ENCODE measurements at regions of chr22 and their contacts with region 1.

Region 1: DNA sequence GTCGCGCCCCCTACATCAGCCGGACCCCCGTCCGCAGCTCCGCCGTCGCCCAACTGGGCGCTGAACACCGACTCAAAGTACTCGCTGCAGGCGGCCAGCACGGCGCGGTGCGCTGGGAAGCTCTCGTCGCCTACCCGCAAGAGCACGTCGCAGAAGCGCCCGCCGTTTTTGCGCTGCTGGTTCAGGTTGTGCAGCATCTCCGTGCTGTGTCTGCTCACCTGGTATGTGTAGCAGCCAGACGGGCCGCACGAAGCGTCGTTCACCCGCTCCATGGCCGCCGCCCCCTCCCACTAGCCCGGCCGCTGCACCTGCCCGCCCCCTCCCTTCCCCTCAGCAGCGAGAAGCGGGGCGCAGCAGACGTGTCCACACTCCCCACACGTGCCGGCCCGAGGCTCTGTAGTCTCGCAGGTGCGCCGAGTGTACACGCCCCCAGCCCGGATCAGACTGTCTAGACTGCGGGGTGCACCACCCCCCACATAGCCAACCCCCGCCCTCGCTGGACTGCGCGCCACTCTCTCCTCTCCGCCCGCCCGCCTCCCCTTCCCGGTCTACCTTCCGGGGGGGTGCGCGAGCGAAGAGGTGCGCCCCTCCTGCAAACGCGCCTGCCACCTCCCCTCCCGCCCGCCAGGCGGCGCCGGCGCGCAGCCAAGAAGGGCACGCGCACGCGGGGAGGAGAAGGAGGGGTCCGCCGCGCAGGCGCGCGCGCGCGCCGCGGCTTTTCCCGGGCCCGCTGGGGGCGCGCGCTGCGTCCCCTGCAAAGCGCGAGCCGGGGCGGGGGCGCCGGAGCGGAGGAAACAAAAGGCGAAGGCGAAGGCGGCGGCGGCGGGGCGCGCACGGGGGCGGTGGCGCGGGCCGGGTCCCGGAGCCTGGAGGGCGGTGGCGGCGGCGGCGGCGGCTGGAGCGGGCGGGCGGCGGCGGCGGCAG is 553 bp downstream of the PATZ1 start:
- DNase-seq: peak; percentile 89
- ATAC-seq: peak; percentile 59
- H3K4me3 Mint-ChIP-seq: peak overlapping the region; percentile 83
- H3K27ac Mint-ChIP-seq: peak overlapping the region; percentile 84
- H3K4me1 Mint-ChIP-seq: peaks cover 52% of the 10 kb centered on the region
- H3K27me3 Mint-ChIP-seq: no peaks in the 10 kb centered on the region

Region 2: DNA sequence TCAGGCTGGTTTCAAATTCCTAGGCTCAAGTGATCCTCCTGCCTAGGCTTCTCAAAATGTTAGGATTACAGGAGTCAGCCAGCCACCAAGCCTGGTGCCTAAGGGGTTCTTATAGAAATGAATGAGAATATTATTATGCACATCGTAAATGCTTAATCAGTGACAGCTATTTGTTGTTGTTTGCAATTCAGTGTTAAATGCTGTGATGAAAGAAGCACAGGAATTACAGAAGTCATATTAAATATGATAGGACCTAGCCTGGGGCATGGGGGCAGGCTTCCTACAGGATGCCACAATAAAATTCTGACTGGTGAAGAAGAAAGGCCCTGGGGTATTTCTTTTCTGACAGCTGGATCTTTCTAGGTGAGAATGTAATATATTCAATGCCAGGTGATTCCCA is 14.4 kb after region 1 on chr22:
- CTCF ChIA-PET with region 1: interaction called, 12 read pairs
- POLR2A ChIA-PET with region 1: interaction called, 7 read pairs
- DNase-seq: no peak
- ATAC-seq: no peak
- H3K4me3 Mint-ChIP-seq: no peak overlapping the region
- H3K27ac Mint-ChIP-seq: no peak overlapping the region
- H3K4me1 Mint-ChIP-seq: no peaks in the 10 kb centered on the region
- H3K27me3 Mint-ChIP-seq: no peaks in the 10 kb centered on the region

Region 3: GRCh38 chr22:31399211-31400028 is 53.8 kb after region 1 on chr22 and contains the start of gene DRG1:
- CTCF ChIA-PET with region 1: interaction called, 5 read pairs
- POLR2A ChIA-PET with region 1: interaction called, 24 read pairs
- DNase-seq: peak; percentile 98
- ATAC-seq: peak; percentile 99
- H3K4me3 Mint-ChIP-seq: peak within 1 kb of the TSS; percentile 94
- H3K27ac Mint-ChIP-seq: peak within 1 kb of the TSS; percentile 93
- H3K4me1 Mint-ChIP-seq: peaks cover 24% of the 10 kb centered on the region
- H3K27me3 Mint-ChIP-seq: peaks cover 1% of the 10 kb centered on the region
- total RNA-seq, gene DRG1: 84.0 to 91.4 TPM

Region 4: GRCh38 chr22:31425331-31426050 is 79.9 kb after region 1 on chr22:
- CTCF ChIA-PET with region 1: no interaction called
- POLR2A ChIA-PET with region 1: no interaction called
- DNase-seq: no peak
- ATAC-seq: no peak
- H3K4me3 Mint-ChIP-seq: no peak overlapping the region
- H3K27ac Mint-ChIP-seq: no peak overlapping the region
- H3K4me1 Mint-ChIP-seq: no peaks in the 10 kb centered on the region
- H3K27me3 Mint-ChIP-seq: no peaks in the 10 kb centered on the region

Region 5: DNA sequence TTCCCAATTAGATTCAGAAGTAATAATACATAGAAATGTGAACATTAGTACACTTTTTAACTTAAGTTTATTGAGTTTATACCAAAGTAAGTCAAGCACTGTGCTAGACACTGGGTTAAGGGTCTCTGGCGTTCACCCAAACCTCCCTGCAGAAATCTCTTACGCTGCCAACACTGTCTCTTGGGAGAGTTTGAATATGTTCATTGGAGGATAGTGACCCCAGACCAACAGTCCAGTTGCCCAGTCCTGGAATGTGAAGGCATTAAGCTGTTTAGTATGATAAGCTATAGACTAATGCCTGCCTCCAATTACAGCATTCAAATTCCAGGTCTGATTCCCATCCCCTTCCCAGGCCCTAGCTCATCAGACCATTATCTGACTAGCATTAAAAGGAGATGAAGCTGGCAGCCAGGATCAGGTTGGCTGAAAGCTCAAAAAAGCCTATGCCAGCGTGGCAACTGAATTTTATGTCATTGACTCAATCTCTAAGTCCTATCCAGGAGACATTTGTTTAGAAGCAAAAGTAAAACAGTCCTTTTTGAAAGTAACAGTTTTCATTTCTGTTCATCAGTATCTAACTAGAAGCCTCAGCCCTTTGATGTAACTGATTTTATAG is 228.6 kb after region 1 on chr22:
- CTCF ChIA-PET with region 1: no interaction called
- POLR2A ChIA-PET with region 1: no interaction called
- DNase-seq: no peak
- ATAC-seq: no peak
- H3K4me3 Mint-ChIP-seq: no peak overlapping the region
- H3K27ac Mint-ChIP-seq: no peak overlapping the region
- H3K4me1 Mint-ChIP-seq: peaks cover 7% of the 10 kb centered on the region
- H3K27me3 Mint-ChIP-seq: no peaks in the 10 kb centered on the region

Measured in activated CD8-positive, alpha-beta T cell treated with anti-CD3 and anti-CD28 coated beads, Interleukin-2, amount 10 ng/mL, durations not matched to agents 7 days and 5 days (primary cell).